ENCODE measurements at regions of chr1 and their contacts with region 1.

Region 1: DNA sequence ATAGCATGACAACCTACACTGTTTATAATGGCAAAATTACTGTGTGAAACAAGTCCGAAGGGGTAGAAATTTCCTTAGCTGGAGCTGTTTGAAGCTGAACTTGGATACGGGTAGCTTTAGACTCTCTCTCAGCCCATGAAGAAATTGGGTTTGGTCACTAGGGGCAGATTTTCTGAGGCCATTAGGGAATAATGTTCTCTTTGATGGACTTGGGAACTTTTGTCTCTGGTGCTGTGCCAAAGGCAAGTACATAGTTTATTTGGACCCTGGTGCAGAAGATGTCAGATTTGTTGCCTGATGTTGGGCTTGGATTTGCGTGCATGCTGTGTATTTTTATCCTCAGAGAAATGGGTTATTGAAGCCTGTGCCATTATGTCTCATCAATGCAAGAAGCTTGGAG is 109.6 kb downstream of the VPS13D start:
- DNase-seq: peak in 1 of 2 donors; percentile 61
- ATAC-seq: peak in 7 of 8 donors; percentile 11 to 67 (median 31)
- H3K4me3 ChIP-seq: no peak overlapping the region
- H3K27ac ChIP-seq: peak overlapping the region; percentile 57 to 86 (median 76)
- H3K4me1 ChIP-seq: peaks cover 2 to 88% (median 73%) of the 10 kb centered on the region in 9 donors
- H3K27me3 ChIP-seq: no peaks in the 10 kb centered on the region
- CTCF ChIP-seq: peak in 4 of 9 donors; percentile 9 to 31 (median 28)

Region 2: GRCh38 chr1:11518791-11519628 is 820.4 kb before region 1 on chr1:
- intact Hi-C with region 1: no loop called
- DNase-seq: no peak
- ATAC-seq: no peak
- H3K4me3 ChIP-seq: no peak overlapping the region
- H3K27ac ChIP-seq: no peak overlapping the region
- H3K4me1 ChIP-seq: no peaks in the 10 kb centered on the region
- H3K27me3 ChIP-seq: peaks cover 0 to 10% (median 0%) of the 10 kb centered on the region in 7 donors
- CTCF ChIP-seq: no peak

Region 3: DNA sequence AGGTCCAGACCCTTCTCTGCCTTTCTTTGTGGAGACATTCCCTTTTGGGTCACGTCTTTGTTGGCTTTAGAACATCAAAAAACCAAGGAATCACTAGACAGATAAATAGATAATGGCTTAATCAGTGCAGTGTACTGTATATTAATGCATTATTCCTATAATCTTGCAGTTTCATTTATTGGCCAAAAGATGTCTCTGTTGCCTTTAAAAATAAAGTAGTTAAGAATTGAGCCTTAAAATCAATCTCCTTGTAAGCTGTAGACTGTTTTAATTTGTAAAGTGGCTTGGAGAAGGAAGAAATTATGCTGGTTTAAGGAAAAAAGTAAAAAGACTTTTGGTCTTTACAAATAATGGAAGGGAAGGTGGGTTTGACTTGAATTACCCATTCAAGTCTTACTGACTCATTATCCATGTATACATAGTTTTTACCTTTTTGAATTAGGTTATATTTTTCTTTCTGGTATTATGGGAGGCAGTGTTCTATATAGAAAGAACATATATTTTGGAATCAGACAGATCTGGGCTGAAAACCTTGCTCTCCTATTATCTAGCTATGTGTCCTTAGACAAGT is 25.0 kb before region 1 on chr1:
- intact Hi-C with region 1: loop called in 1 of 10 experiments (anchors 2 kb)
- DNase-seq: no peak
- ATAC-seq: peak in 5 of 8 donors; percentile 27 to 69 (median 63)
- H3K4me3 ChIP-seq: no peak overlapping the region
- H3K27ac ChIP-seq: peak overlapping the region in 4 of 10 donors; percentile 23 to 49 (median 32)
- H3K4me1 ChIP-seq: peaks cover 2 to 35% (median 11%) of the 10 kb centered on the region in 9 donors
- H3K27me3 ChIP-seq: no peaks in the 10 kb centered on the region
- CTCF ChIP-seq: peak; percentile 24 to 74 (median 57)

Region 4: DNA sequence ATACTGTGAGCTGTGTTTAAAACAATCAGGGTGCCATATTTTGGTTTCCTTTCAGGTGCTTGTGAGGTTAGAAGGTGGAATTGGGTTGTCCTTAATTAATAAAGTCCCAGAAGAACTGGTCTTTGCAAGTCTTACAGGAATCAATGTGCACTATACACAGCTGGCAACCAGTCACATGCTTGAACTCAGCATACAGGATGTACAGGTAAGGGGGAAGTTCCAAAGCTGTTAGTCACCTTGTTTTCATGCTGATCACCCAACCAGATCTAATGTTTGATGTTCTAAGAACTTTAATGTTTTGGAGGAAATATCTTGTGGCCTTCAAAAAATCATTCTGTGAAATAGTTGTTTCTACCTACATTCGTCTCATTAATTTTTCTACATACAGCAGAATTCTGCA is 46.7 kb after region 1 on chr1:
- intact Hi-C with region 1: no loop called
- DNase-seq: no peak
- ATAC-seq: no peak
- H3K4me3 ChIP-seq: no peak overlapping the region
- H3K27ac ChIP-seq: peak overlapping the region in 1 of 10 donors; percentile 28
- H3K4me1 ChIP-seq: peaks cover 0 to 10% (median 4%) of the 10 kb centered on the region in 9 donors
- H3K27me3 ChIP-seq: no peaks in the 10 kb centered on the region
- CTCF ChIP-seq: no peak

Region 5: DNA sequence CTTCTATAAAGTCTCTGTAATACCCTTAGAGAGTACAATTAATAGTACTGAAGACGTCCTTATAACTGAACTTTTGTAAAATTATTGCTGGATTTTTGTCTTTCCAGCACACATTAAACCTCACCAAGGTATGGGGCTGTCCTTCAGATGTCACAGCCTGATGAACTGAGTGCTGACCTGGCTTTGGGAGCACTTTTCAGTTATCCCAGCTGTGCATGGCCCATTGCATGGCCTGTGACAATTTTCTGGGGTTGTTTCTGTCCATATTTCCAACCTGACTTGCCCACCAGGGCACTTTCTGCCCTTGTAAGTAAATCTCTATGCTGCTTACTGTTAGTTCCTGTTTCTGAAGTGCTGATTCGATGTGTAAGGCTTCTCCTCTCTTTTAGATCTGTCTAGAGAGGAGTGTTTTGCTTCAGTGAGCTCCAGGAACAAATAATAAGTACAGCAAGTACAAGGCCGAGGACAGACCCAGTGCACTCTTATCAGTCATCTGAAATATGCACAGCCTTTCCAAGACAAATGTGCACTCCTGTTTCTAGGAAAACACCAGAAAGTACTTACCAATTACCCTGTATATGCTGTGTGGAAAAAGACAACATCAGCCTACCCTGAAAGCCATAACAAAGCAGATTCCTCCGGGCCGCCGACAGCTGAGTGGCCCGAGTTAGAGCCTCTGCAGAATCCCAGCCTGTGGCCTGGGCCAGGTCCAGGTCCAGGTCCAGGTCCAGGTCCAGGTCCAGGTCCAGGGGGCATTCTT is 156.9 kb after region 1 on chr1:
- intact Hi-C with region 1: loop called in 1 of 10 experiments (anchors 10 kb)
- DNase-seq: no peak
- ATAC-seq: peak; percentile 44 to 88 (median 76)
- H3K4me3 ChIP-seq: no peak overlapping the region
- H3K27ac ChIP-seq: peak overlapping the region in 9 of 10 donors; percentile 46 to 83 (median 68)
- H3K4me1 ChIP-seq: peaks cover 8 to 31% (median 26%) of the 10 kb centered on the region in 9 donors
- H3K27me3 ChIP-seq: no peaks in the 10 kb centered on the region
- CTCF ChIP-seq: no peak

Measured in heart right ventricle (tissue), 16 donors.